ENCODE measurements at regions of chr15 and their contacts with region 1.

Region 1: GRCh38 chr15:44711356-44712107 is at the start of gene B2M:
- DNase-seq: peak; percentile 99
- H3K4me3 Mint-ChIP-seq: peak within 1 kb of the TSS; percentile 94
- H3K27ac Mint-ChIP-seq: peak within 1 kb of the TSS; percentile 100
- H3K4me1 Mint-ChIP-seq: peaks cover 44% of the 10 kb centered on the region
- H3K27me3 Mint-ChIP-seq: no peaks in the 10 kb centered on the region
- total RNA-seq, gene B2M: 4,380 and 4,481 TPM in 2 replicates

Region 2: GRCh38 chr15:44536962-44537734 is 174.4 kb before region 1 on chr15 and contains the start of gene EIF3J:
- intact Hi-C with region 1: loop called (anchors 2 kb)
- DNase-seq: peak; percentile 98
- H3K4me3 Mint-ChIP-seq: peak within 1 kb of the TSS; percentile 84
- H3K27ac Mint-ChIP-seq: peak within 1 kb of the TSS; percentile 96
- H3K4me1 Mint-ChIP-seq: peaks cover 43% of the 10 kb centered on the region
- H3K27me3 Mint-ChIP-seq: no peaks in the 10 kb centered on the region
- total RNA-seq, gene EIF3J: 161 and 166 TPM in 2 replicates

Region 3: GRCh38 chr15:44682211-44682610 is 29.3 kb before region 1 on chr15:
- intact Hi-C with region 1: loop called (anchors 1 kb)
- DNase-seq: no peak
- H3K4me3 Mint-ChIP-seq: peak overlapping the region; percentile 73
- H3K27ac Mint-ChIP-seq: peak overlapping the region; percentile 91
- H3K4me1 Mint-ChIP-seq: peaks cover 64% of the 10 kb centered on the region
- H3K27me3 Mint-ChIP-seq: no peaks in the 10 kb centered on the region

Region 4: DNA sequence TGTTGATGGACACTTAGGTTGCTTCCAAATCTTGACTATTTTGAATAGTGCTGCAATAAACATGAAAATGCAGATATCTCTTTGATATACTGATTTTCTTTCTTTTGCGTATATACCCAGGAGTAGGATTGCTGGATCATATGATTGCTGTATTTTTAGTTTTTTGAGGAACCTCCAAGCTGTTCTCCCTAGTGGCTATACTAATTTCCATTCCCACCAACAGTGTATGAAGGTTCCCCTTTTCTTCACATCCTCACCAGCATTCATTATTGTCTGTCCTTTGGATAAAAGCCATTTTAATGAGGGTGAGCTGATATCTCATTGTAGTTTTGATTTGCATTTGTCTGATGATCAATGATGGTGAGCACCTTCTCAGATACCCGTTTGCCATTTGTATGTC is 12.9 kb before region 1 on chr15:
- intact Hi-C with region 1: no loop called
- DNase-seq: no peak
- H3K4me3 Mint-ChIP-seq: no peak overlapping the region
- H3K27ac Mint-ChIP-seq: no peak overlapping the region
- H3K4me1 Mint-ChIP-seq: peaks cover 19% of the 10 kb centered on the region
- H3K27me3 Mint-ChIP-seq: peaks cover 15% of the 10 kb centered on the region

Region 5: GRCh38 chr15:44728576-44729407 is 17.3 kb after region 1 on chr15:
- intact Hi-C with region 1: loop called (anchors 1 kb)
- DNase-seq: peak; percentile 99
- H3K4me3 Mint-ChIP-seq: peak overlapping the region; percentile 99
- H3K27ac Mint-ChIP-seq: peak overlapping the region; percentile 100
- H3K4me1 Mint-ChIP-seq: peaks cover 64% of the 10 kb centered on the region
- H3K27me3 Mint-ChIP-seq: peaks cover 2% of the 10 kb centered on the region

Region 6: GRCh38 chr15:44753345-44753744 is 41.8 kb after region 1 on chr15:
- intact Hi-C with region 1: no loop called
- DNase-seq: no peak
- H3K4me3 Mint-ChIP-seq: no peak overlapping the region
- H3K27ac Mint-ChIP-seq: no peak overlapping the region
- H3K4me1 Mint-ChIP-seq: peaks cover 12% of the 10 kb centered on the region
- H3K27me3 Mint-ChIP-seq: no peaks in the 10 kb centered on the region

Region 7: GRCh38 chr15:45091161-45091560 is 379.6 kb after region 1 on chr15:
- intact Hi-C with region 1: no loop called
- DNase-seq: no peak
- H3K4me3 Mint-ChIP-seq: no peak overlapping the region
- H3K27ac Mint-ChIP-seq: no peak overlapping the region
- H3K4me1 Mint-ChIP-seq: no peaks in the 10 kb centered on the region
- H3K27me3 Mint-ChIP-seq: peaks cover 25% of the 10 kb centered on the region